Right lobe of liver (tissue), 6 donors: ENCODE measurements at regions of chr13 and their contacts with region 1.

Region 1: GRCh38 chr13:20566898-20567874 is at the start of gene IFT88:
- DNase-seq: peak; percentile 94
- ATAC-seq: peak; percentile 93 to 98 (median 94)
- H3K4me3 ChIP-seq: peak within 1 kb of the TSS; percentile 58 to 88 (median 84)
- H3K27ac ChIP-seq: peak within 1 kb of the TSS; percentile 83 to 85 (median 83)
- H3K4me1 ChIP-seq: peaks cover 0 to 3% (median 0%) of the 10 kb centered on the region in 4 donors
- H3K27me3 ChIP-seq: no peaks in the 10 kb centered on the region
- CTCF ChIP-seq: no peak
- POLR2A ChIP-seq: peak; percentile 86
- total RNA-seq, gene IFT88: 7.9 to 17.6 (median 11.8) TPM

Region 2: DNA sequence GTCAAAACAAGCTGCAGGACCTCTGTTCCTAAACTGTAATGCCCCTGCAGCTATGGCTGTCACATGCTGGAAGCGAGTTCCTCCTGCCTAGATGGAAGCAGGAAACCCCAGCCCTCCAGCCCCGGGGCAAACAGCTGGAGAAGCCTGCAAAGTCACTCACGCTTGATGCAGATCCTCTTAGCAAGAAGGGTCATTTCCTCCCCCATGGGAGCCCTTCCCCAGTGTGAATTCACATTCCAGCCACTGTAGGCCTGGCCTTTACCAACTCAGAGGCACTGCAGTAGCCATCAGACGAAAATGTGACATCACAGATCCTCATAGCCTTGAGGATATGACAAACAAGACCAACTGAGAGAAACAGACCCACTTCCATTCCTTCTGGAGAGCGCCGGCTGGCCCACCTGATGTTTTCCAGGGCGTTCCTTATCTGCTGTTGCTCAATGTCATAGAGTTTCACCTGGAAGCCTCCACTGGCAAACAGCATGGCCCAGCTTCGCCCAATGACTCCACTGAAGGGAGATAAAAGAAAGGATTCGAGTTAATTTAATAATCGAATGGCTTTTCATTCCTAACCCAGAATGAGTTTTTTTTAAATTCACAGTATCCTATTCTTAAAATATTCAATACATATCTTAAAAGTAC is 55.0 kb before region 1 on chr13:
- intact Hi-C with region 1: loop called in 1 of 2 experiments (anchors 10 kb)
- DNase-seq: no peak
- ATAC-seq: peak; percentile 65 to 88 (median 84)
- H3K4me3 ChIP-seq: no peak overlapping the region
- H3K27ac ChIP-seq: peak overlapping the region in 2 of 3 donors; percentile 65 to 69
- H3K4me1 ChIP-seq: peaks cover 0 to 37% (median 13%) of the 10 kb centered on the region in 4 donors
- H3K27me3 ChIP-seq: no peaks in the 10 kb centered on the region
- CTCF ChIP-seq: no peak
- POLR2A ChIP-seq: no peak